OCI-LY7 (cell line): ENCODE measurements at regions of chr19 and their contacts with region 1.

Region 1: DNA sequence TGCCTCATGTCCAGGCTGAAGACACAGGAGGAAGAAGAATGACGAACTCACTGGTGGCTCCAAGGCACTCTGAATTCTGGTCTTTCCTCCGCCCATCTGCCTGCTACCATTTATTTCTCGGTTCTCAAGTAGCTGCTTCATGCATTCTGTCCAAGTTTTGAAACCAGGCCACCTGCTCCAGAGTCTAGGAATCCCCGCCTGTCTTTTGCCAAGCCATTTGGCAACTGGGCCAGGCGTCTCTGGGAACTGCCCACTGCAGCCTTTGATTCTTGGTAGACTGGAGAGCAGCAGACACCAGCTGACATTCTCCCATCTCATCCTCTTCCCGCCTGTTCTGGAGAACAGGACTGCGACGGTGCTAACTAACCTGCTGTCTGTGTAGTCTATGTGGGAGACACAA is 10.8 kb downstream of the SLC35E1 start:
- DNase-seq: no peak
- H3K4me3 ChIP-seq: no peak overlapping the region
- H3K27ac ChIP-seq: no peak overlapping the region
- H3K4me1 ChIP-seq: no peaks in the 10 kb centered on the region
- CTCF ChIP-seq: no peak

Region 2: DNA sequence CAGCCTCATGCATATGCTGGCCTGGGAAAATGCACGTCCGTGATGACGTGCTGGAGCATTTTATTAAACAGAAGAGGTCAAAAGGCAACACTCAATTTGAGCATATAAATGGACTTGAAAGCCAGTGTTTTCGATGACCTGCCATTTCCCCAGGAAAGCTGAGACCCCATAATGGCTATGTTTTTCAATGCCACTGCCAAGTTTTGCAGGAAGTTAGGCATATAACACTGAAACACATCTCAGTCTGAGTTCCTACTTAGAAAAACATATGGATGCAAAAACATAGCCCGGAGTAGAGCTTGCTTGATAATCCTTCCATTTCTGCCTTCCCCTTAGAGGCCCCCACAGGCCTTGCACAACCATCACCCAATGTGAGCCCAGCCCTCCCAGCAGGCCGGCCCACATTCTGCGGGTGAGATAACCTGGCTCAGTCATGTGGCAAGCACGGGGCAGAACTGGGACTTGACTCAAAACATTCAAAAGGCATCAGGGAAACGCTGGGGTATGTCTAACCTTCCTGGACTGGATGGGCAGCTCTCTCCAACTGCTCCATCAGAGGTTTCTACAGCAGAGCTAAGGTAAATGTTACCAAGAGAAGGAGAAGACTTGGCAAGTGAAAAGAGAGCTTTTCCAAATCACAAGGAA is 114.5 kb before region 1 on chr19:
- CTCF ChIA-PET with region 1: no interaction called
- POLR2A ChIA-PET with region 1: no interaction called
- intact Hi-C with region 1: no loop called
- DNase-seq: peak; percentile 81
- H3K4me3 ChIP-seq: peak overlapping the region; percentile 48
- H3K27ac ChIP-seq: peak overlapping the region; percentile 96
- H3K4me1 ChIP-seq: peaks cover 95% of the 10 kb centered on the region
- CTCF ChIP-seq: no peak

Region 3: GRCh38 chr19:16532440-16533234 is 28.7 kb before region 1 on chr19:
- CTCF ChIA-PET with region 1: no interaction called
- POLR2A ChIA-PET with region 1: interaction called, 10 read pairs
- intact Hi-C with region 1: no loop called
- DNase-seq: no peak
- H3K4me3 ChIP-seq: no peak overlapping the region
- H3K27ac ChIP-seq: no peak overlapping the region
- H3K4me1 ChIP-seq: no peaks in the 10 kb centered on the region
- CTCF ChIP-seq: no peak

Region 4: GRCh38 chr19:16654140-16654539 is 92.8 kb after region 1 on chr19:
- CTCF ChIA-PET with region 1: no interaction called
- POLR2A ChIA-PET with region 1: no interaction called
- intact Hi-C with region 1: no loop called
- DNase-seq: no peak
- H3K4me3 ChIP-seq: no peak overlapping the region
- H3K27ac ChIP-seq: no peak overlapping the region
- H3K4me1 ChIP-seq: peaks cover 11% of the 10 kb centered on the region
- CTCF ChIP-seq: no peak